OCI-LY7 (cell line): ENCODE measurements at regions of chr2 and their contacts with region 1.

Region 1: DNA sequence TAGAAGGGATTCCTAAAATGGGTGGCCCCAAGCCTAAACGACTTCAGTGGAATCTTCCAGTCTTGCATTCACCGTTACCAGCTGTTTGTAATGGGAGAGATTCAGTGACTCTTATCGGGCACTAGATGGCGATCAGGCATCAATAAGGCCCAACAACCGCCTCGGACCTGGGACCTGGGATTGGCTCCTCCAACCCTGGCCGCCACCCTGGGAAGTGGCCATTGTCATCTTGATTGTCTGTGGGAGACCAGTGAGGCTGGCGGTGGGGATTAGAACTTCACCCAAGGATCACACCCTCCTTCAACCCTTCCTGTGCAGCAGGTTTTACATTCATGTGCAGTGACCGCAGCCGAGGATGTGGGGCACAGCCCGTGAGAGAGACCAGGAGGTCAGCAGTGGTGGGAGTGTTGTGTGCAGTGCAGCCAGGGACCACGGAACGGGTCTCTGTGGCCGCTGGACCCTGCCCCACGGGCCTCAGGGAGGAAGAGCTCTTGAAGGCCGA is 85.3 kb downstream of the SPP2 start:
- DNase-seq: peak; percentile 81
- H3K4me3 ChIP-seq: no peak overlapping the region
- H3K27ac ChIP-seq: no peak overlapping the region
- H3K4me1 ChIP-seq: no peaks in the 10 kb centered on the region
- CTCF ChIP-seq: peak; percentile 96

Region 2: DNA sequence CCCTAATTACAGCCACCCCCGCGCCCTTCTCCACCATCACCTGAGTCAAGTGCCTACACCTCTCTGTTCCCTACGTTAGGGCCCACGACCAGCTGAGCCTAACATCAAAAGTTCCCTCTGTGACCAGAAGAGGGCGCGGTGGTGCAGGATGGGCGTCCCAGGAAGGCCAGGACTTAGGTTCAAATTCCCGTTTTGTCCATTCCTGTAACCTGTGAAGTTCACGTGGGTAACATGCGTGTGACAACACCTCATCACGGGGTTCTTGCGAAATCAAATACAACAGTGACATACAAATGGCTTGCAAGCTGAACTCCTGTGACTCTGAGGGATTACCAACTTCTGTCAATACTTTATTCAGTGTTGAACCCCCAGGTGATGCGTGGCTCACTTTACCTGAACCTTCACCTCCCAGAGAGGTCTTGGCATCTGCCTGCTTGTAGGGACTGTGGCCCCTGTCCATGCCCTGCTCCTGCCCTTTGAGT is 153.2 kb after region 1 on chr2:
- CTCF ChIA-PET with region 1: no interaction called
- POLR2A ChIA-PET with region 1: no interaction called
- intact Hi-C with region 1: loop called (anchors 2 kb)
- DNase-seq: peak; percentile 72
- H3K4me3 ChIP-seq: peak overlapping the region; percentile 4
- H3K27ac ChIP-seq: peak overlapping the region; percentile 97
- H3K4me1 ChIP-seq: peaks cover 56% of the 10 kb centered on the region
- CTCF ChIP-seq: peak; percentile 95

Region 3: DNA sequence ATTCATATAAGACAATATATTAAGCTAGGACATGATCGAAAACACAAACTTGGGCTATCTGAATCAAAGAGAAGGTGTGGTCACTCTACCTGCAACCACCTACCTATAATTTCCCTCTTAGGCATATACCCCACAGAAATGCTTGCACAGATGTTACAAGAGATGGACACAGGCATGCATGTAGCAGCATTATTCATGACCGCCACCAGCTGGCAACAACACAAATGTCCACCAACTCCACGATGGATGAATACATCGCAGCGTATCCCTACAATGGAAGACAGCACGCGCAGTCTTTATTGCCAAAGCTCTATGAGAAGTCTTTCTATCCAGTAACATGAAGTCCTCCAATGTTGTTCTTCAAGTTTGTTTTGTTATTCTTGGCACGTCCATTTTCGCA is 270.3 kb after region 1 on chr2:
- CTCF ChIA-PET with region 1: no interaction called
- POLR2A ChIA-PET with region 1: no interaction called
- intact Hi-C with region 1: loop called (anchors 1 kb)
- DNase-seq: peak; percentile 33
- H3K4me3 ChIP-seq: no peak overlapping the region
- H3K27ac ChIP-seq: no peak overlapping the region
- H3K4me1 ChIP-seq: peaks cover 5% of the 10 kb centered on the region
- CTCF ChIP-seq: peak; percentile 48; the same call in 1 of the 2 replicates

Region 4: DNA sequence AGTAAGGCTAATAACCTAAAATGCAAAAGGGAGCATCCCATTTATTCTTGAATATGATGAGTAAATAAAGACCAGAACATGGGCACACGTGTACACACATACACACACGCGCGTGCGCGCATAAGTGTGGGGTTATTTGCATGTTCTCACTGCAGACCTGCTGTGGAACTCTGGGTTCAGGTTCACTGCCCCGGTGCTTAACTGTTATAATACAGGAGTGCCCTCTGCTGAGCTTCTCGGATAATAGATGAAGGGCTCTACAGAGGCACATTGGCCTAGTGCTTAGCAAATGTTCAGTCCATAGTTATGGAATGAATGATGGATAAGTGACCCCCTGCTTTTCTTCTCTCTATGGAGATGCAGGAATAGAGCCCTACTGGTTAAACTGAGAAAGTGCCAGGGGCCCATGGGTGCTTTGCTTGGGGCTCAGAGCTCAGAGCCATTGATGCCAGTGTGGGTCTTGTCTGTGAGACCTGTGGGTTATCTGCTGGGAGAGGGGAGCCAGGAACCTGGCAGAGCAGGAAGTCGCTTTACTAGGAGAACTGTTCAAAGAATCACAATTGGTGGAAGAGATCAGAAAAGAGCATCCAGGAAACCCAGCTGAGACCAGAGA is 364.7 kb after region 1 on chr2:
- CTCF ChIA-PET with region 1: interaction called, 3 read pairs
- POLR2A ChIA-PET with region 1: interaction called, 4 read pairs
- intact Hi-C with region 1: loop called (anchors 1 kb)
- DNase-seq: peak; percentile 92
- H3K4me3 ChIP-seq: no peak overlapping the region
- H3K27ac ChIP-seq: no peak overlapping the region
- H3K4me1 ChIP-seq: peaks cover 19% of the 10 kb centered on the region
- CTCF ChIP-seq: peak; percentile 95

Region 5: DNA sequence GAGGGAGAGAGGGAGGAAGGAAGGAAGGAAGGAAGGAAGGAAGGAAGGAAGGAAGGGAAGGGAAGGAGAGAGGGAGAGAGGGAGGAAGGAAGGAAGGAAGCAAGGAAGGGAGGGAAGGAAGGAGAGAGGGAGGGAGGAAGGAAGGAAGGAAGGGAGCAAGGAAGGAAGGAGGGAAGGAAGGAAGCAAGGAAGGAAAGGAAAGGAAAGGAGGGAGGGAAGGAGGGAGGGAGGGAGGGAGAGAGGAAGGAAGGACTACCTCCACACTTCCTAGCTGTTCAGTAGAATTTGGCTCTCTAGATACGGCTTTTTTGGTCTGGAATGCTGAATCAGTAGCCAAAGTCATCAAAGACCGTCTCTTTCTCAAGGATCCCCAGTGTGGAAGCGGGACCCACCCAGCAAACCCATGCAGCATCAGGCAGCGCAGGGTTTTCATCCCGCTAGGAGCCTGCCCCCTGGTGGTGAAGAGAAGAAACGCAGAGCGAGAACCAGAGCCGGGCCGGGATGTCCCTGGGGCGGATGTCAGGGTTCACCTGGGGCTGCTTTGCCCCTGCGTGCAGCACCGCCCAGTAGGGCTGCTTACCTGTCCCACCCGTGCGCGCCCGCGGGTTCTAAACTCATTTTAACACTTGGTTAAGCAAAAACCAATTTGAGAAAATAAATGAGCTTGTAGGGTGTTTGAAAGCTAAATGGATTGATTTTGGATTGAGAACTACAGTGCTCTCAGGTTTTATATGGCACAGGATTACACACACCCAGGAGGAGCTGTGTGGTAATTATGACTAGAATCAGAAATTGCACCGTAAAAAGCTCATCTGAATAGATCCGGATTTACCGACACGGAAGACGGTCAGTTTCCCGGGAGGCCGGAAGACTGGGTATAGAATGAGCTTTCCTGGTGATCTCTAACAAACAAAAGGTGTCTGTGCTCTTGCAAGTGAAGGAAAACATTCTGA is 409.2 kb after region 1 on chr2:
- CTCF ChIA-PET with region 1: interaction called, 3 read pairs
- POLR2A ChIA-PET with region 1: no interaction called
- intact Hi-C with region 1: loop called (anchors 1 kb)
- DNase-seq: peak; percentile 75
- H3K4me3 ChIP-seq: no peak overlapping the region
- H3K27ac ChIP-seq: no peak overlapping the region
- H3K4me1 ChIP-seq: no peaks in the 10 kb centered on the region
- CTCF ChIP-seq: peak; percentile 93